Common myeloid progenitor, CD34-positive (primary cell): ENCODE measurements at regions of chr17 and their contacts with region 1.

Region 1: DNA sequence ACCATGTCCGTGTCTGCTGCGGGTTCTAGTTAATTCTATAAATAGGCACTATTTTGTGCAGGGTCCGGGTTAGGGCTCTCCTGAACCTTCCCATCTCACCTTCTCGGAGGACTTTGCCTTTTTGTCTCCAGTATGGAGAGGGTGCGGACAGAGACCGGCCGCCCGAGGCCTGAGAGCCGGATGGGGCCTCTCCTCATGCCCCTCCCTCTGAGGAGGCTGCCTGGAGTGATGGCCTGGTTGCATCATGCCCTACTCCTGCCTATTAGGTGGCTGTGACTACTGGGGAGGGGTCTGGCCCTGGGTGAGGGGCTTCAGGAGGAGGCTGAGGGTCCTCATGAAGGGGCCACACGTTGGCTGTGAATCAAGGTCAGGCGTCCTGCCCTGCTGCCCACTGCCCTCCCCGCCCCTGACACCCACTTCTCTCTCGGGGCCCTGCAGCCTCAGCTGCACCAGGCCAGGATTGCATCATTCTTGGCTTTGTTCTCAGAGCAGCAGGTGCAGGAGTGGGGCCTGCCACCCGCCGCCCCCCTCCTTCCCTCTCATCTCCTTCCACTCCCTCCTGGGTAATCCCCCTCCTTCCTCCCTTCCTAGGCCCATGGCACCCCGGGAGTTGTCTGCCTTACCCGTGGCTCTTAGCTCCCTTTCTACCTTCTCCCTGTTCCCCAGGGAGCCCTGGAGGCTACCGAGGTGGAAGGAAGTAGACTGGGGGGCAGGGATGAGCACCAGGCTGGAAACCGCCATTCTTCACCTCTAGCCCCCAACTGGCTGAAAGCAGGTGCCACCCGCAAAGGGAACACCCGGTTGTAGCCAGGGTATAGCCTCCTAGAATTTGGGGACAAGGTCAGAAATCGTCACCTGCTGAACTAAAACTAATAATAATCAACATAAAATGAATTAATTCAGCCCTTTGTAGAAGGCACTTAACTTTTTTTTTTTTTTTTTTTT is 12.7 kb upstream of the ARHGAP23 start:
- DNase-seq: peak; percentile 44 to 63 (median 55)
- H3K4me3 ChIP-seq: peak overlapping the region in 1 of 7 experiments; percentile 1
- H3K27ac ChIP-seq: no peak overlapping the region
- H3K4me1 ChIP-seq: peaks cover 0 to 31% (median 23%) of the 10 kb centered on the region in 4 experiments
- H3K27me3 ChIP-seq: peaks cover 0 to 35% (median 20%) of the 10 kb centered on the region in 5 experiments

Region 2: GRCh38 chr17:38333635-38334295 is 81.8 kb before region 1 on chr17:
- CTCF ChIA-PET with region 1: interaction called, 13 read pairs
- POLR2A ChIA-PET with region 1: no interaction called
- DNase-seq: peak in 2 of 3 donors; percentile 36 to 53
- H3K4me3 ChIP-seq: no peak overlapping the region
- H3K27ac ChIP-seq: no peak overlapping the region
- H3K4me1 ChIP-seq: no peaks in the 10 kb centered on the region
- H3K27me3 ChIP-seq: no peaks in the 10 kb centered on the region

Region 3: GRCh38 chr17:38467491-38467890 is 52.0 kb after region 1 on chr17:
- CTCF ChIA-PET with region 1: no interaction called
- POLR2A ChIA-PET with region 1: no interaction called
- DNase-seq: no peak
- H3K4me3 ChIP-seq: no peak overlapping the region
- H3K27ac ChIP-seq: no peak overlapping the region
- H3K4me1 ChIP-seq: no peaks in the 10 kb centered on the region
- H3K27me3 ChIP-seq: no peaks in the 10 kb centered on the region